ENCODE measurements at regions of chrX and their contacts with region 1.

Region 1: DNA sequence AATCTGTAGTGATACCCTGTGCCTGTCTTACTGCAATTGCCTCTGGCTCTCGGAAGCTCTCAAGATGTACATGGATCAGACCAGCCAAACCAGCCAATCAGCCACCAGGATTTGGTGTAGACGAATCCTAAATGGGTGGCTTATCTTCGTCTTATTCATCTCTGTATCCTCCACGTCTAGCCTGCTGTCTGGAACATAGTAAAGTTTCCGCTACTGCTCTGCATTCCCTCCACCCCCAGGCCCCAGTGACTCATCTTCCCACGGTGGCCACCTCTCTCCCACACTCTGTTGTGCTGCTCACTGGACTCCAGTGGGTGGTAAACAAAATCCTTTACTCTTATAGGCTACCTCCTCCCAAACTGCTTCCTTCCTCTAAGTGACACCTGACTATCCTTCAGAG is 37.8 kb downstream of the SEPTIN6 start:
- DNase-seq: peak; percentile 80
- H3K4me3 Mint-ChIP-seq: peak overlapping the region; percentile 66
- H3K27ac Mint-ChIP-seq: peak overlapping the region; percentile 94
- H3K4me1 Mint-ChIP-seq: peaks cover 33% of the 10 kb centered on the region
- H3K27me3 Mint-ChIP-seq: no peaks in the 10 kb centered on the region

Region 2: DNA sequence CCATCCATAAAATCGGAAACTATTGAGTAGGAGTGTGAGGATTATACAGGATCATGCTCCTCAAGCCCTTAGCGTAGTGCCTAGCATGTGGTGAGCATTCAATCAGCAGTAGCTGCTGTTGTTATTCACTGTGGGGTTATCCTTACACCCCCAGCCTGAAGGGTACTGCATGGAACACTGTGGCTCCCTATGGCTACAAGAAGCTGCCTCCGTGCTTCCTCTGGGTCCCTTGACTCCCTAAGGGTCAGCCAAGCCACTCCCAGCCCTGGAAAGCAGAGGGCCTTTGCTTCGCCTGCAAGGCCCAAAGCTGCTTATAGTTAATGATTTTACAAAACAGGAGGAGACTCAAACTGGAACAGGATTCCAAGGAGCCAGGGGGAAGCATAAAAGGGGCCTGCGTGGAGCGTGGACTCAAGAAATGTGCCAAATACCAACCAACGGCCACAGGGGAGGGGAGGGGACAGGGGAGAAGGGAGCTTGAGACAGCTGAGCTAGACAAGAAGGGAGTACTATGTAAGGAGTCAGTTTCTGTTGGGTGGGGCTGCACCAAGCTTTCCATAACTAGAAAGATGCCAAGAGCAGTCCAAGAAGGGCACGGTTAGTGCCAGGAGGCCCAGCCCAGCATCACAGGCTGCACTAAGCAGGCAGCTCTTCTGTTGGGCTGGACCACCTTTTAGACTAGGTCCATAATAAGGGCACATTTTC is 22.0 kb after region 1 on chrX:
- intact Hi-C with region 1: loop called (anchors 1 kb)
- DNase-seq: no peak
- H3K4me3 Mint-ChIP-seq: peak overlapping the region; percentile 85
- H3K27ac Mint-ChIP-seq: peak overlapping the region; percentile 96
- H3K4me1 Mint-ChIP-seq: peaks cover 37% of the 10 kb centered on the region
- H3K27me3 Mint-ChIP-seq: no peaks in the 10 kb centered on the region